Activated T-helper 1 cell treated with anti-CD3 and anti-CD28 coated beads, Interleukin-12 subunit alpha, Interleukin-12 subunit beta, Interleukin-2, Interleukin-4 antibody, amounts not matched to agents 30 ng/mL and 10 ng/mL and 1 ng/mL, durations not matched to agents 14 hours and 24 hours and 36 hours (primary cell): ENCODE measurements at regions of chr10 and their contacts with region 1.

Region 1: GRCh38 chr10:50508315-50509051 is 115.3 kb downstream of the SGMS1 start:
- DNase-seq: peak; percentile 37
- H3K4me3 Mint-ChIP-seq: no peak overlapping the region
- H3K27ac Mint-ChIP-seq: no peak overlapping the region
- H3K4me1 Mint-ChIP-seq: peaks cover 79% of the 10 kb centered on the region
- H3K27me3 Mint-ChIP-seq: no peaks in the 10 kb centered on the region

Region 2: DNA sequence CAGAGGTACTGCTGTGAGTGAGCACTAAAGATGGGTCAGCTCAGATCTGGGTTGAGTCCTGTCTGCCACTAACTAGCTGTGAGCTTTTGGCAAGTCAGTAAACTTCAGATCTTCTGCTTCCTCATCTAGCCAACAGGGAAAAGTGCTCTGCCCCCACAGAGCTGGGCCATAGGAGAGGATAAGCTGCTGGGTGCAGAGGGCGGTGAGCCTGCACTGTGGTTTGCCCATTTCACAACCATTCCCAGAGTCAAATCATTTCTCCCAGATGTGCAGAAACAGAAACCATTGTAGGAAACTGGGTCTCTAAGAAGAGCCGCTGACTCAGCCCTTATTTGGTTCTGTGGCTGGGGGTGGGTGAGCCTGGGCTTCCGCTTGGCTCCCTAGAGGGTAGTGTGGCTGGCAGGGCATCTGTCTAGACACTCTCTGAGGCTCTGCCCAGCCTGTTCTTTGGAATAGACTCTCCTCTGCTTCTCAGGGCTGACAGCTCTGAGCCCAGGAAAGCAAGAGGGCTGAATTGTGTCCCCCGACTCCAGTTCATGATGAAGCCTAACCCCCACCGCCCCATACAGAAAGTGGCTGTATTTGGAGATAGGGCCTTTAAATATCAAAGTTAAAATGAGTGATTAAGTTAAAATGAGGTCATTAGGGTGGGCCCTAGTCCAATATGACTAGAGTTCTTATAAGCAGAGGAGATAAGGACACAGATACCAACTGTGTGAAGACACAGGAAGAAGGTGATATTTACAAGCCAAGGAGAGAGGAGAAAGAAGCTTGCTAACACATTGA is 1874.1 kb before region 1 on chr10:
- intact Hi-C with region 1: loop called (anchors 5 kb)
- DNase-seq: peak; percentile 15
- H3K4me3 Mint-ChIP-seq: no peak overlapping the region
- H3K27ac Mint-ChIP-seq: peak overlapping the region; percentile 20
- H3K4me1 Mint-ChIP-seq: peaks cover 20% of the 10 kb centered on the region
- H3K27me3 Mint-ChIP-seq: peaks cover 2% of the 10 kb centered on the region

Region 3: GRCh38 chr10:50315424-50315823 is 193.1 kb before region 1 on chr10:
- intact Hi-C with region 1: no loop called
- DNase-seq: no peak
- H3K4me3 Mint-ChIP-seq: no peak overlapping the region
- H3K27ac Mint-ChIP-seq: peak overlapping the region; percentile 61
- H3K4me1 Mint-ChIP-seq: peaks cover 43% of the 10 kb centered on the region
- H3K27me3 Mint-ChIP-seq: no peaks in the 10 kb centered on the region

Region 4: DNA sequence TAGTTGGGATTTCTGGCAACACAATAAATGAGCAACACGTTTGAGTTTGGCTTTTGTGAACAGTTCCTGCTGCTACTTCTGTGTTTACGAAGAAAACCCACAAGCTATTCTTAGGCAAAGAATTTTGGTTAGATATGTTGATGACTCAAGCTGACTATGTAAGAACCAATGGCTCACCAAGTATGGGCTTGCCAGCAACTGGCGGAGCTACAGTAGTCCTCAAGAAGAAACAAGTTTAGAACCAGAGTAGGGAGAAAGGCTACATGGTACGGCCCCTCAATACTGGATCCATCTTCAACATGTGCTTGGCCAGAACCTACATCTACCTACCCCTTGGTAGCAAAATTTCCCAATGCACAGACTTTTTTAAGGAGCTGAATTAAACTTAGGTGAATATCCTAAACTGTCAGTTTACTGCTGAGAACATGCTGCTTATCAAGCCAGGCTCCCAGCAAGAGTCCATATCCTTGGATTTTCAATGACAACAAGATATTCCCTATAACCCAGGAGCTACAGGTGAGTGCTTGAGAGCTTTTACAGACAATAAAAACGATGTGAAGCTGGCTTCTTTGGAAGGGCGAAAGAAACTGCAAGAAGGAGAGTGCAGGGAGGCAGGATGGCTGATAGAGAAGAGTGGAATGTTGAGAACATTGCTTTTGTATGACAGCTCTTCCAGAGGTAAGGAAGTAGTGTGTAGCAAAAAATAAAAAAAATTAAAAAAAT is 182.9 kb before region 1 on chr10:
- intact Hi-C with region 1: loop called (anchors 5 kb)
- DNase-seq: peak; percentile 15
- H3K4me3 Mint-ChIP-seq: peak overlapping the region; percentile 79
- H3K27ac Mint-ChIP-seq: peak overlapping the region; percentile 19
- H3K4me1 Mint-ChIP-seq: peaks cover 74% of the 10 kb centered on the region
- H3K27me3 Mint-ChIP-seq: no peaks in the 10 kb centered on the region

Region 5: GRCh38 chr10:50497757-50498156 is 10.7 kb before region 1 on chr10:
- intact Hi-C with region 1: loop called (anchors 1 kb)
- DNase-seq: no peak
- H3K4me3 Mint-ChIP-seq: peak overlapping the region; percentile 45
- H3K27ac Mint-ChIP-seq: peak overlapping the region; percentile 82
- H3K4me1 Mint-ChIP-seq: peaks cover 54% of the 10 kb centered on the region
- H3K27me3 Mint-ChIP-seq: no peaks in the 10 kb centered on the region

Region 6: DNA sequence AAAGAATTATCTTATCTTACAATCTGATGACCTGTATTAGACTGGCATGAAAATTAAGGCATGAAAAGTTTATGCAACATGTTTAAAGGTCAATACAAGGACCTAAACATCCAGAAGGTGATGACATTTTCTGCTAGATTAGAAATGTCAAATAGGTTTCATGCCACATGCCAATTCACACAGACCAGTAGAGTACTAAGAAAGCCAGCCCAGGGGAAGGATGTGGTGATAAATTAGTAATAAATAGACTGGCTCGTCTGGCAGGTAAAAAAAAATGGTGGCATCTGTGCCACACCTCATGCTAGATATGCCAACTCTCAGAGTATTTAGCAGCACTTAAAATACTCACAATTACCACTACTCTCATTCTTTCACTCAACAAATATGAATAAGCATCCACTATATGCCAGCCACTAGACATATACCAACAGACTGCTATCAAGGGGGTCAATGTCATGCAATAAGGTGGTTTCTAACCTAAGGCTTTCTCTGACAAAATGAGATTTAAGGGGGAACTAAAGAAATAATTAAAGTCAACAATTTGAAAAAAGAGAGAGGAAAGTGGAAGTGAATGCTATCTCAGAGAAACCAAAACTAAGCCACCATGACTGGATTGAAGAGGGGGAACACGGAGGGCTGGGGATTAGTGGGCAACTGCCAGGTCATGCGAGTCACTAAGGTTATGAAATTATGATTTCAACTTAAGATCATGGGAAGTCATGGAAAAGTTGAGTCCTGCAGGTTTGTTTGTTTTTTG is 31.8 kb after region 1 on chr10:
- intact Hi-C with region 1: loop called (anchors 1 kb)
- DNase-seq: no peak
- H3K4me3 Mint-ChIP-seq: peak overlapping the region; percentile 41
- H3K27ac Mint-ChIP-seq: peak overlapping the region; percentile 95
- H3K4me1 Mint-ChIP-seq: peaks cover 87% of the 10 kb centered on the region
- H3K27me3 Mint-ChIP-seq: no peaks in the 10 kb centered on the region

Region 7: GRCh38 chr10:50850578-50851230 is 342.2 kb after region 1 on chr10:
- intact Hi-C with region 1: no loop called
- DNase-seq: no peak
- H3K4me3 Mint-ChIP-seq: no peak overlapping the region
- H3K27ac Mint-ChIP-seq: no peak overlapping the region
- H3K4me1 Mint-ChIP-seq: no peaks in the 10 kb centered on the region
- H3K27me3 Mint-ChIP-seq: peaks cover 5% of the 10 kb centered on the region